ENCODE measurements at regions of chrX and their contacts with region 1.

Region 1: DNA sequence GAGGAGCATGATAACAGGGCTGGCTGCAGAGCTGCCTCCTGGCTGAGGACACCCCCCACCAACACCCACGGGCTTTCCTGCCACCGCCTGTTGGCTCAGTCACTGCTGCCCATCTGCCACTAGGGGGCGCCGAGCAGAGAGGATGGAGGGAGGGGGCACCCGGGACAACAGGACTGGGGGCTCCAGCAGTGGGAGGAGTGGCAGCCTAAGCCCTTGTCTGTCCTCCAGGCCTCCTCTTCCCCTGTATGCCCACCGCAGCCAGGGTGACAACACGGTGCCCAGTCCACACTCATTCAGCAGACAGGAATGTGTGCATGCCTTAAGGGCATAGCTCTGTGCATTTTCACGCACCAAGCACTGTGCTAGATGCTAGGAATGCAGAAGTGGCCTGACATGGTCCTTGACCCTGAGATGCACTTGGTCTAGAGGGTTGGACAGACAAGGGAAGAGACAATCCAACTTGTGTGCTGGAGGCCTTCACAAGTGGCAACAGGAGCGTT is 149.9 kb downstream of the AMMECR1 start:
- DNase-seq: no peak
- ATAC-seq: peak; percentile 24 to 50 (median 34)
- H3K4me3 ChIP-seq: no peak overlapping the region
- H3K27ac ChIP-seq: no peak overlapping the region
- H3K4me1 ChIP-seq: peaks cover 0 to 9% (median 0%) of the 10 kb centered on the region in 12 donors
- H3K27me3 ChIP-seq: no peaks in the 10 kb centered on the region
- CTCF ChIP-seq: peak; percentile 29 to 63 (median 47)
- POLR2A ChIP-seq: no peak

Region 2: GRCh38 chrX:110338915-110339314 is 170.9 kb after region 1 on chrX:
- intact Hi-C with region 1: loop called in 1 of 10 experiments (anchors 10 kb)
- DNase-seq: no peak
- ATAC-seq: no peak
- H3K4me3 ChIP-seq: no peak overlapping the region
- H3K27ac ChIP-seq: no peak overlapping the region
- H3K4me1 ChIP-seq: peaks cover 0 to 5% (median 0%) of the 10 kb centered on the region in 12 donors
- H3K27me3 ChIP-seq: peaks cover 0 to 4% (median 0%) of the 10 kb centered on the region in 9 donors
- CTCF ChIP-seq: no peak
- POLR2A ChIP-seq: no peak

Region 3: DNA sequence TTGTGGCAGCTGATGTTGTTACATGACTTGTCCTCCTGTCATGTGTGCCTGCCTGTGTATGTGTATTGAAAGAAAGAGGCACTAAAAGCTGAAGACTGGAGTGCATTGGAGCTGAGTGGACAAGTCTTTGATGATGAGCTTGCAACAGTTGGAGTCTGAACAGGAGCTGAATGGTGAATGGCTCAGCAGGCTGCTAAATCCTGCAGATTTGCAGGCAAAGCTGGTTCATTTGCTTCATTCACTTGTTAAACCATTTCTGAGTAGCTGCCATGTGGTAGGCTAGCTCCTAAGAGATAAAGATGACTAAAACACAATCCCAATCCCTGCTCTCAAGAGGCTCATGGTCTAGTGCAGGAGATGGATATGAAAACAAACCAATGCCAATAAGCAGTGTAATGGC is 410.3 kb after region 1 on chrX:
- intact Hi-C with region 1: no loop called
- DNase-seq: no peak
- ATAC-seq: no peak
- H3K4me3 ChIP-seq: no peak overlapping the region
- H3K27ac ChIP-seq: no peak overlapping the region
- H3K4me1 ChIP-seq: no peaks in the 10 kb centered on the region
- H3K27me3 ChIP-seq: peaks cover 0 to 21% (median 0%) of the 10 kb centered on the region in 9 donors
- CTCF ChIP-seq: no peak
- POLR2A ChIP-seq: no peak

Measured in heart left ventricle (tissue), 16 donors.